ENCODE measurements at regions of chrX and their contacts with region 1.

Region 1: DNA sequence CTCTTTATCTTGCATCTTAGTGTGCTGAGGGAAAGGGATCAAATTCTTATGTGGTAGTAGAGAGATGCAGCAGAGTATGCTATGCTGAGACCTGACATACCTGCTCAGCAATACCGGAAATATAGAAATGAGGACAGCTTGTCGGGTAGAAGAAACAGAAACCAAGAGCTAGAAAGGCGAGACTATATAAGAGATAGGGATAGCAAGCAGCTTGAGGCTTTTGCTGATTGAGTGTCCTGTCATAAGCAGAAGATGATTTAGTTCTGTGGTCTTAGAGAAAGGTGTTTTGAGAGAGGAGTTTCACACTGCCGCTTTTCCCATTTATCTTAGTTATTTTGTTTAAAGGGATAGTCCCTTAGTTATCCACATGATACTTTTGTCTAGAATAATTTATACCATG is 31.7 kb downstream of the USP9X start:
- DNase-seq: no peak
- H3K4me3 Mint-ChIP-seq: peak overlapping the region; percentile 7
- H3K27ac Mint-ChIP-seq: no peak overlapping the region
- H3K4me1 Mint-ChIP-seq: peaks cover 14% of the 10 kb centered on the region
- H3K27me3 Mint-ChIP-seq: peaks cover 3% of the 10 kb centered on the region
- CTCF ChIP-seq: no peak

Region 2: GRCh38 chrX:40647307-40648197 is 469.4 kb before region 1 on chrX and contains the start of gene CXorf38:
- CTCF ChIA-PET with region 1: interaction called, 21 read pairs
- POLR2A ChIA-PET with region 1: no interaction called
- intact Hi-C with region 1: loop called (anchors 1 kb)
- DNase-seq: peak; percentile 81
- H3K4me3 Mint-ChIP-seq: peak within 1 kb of the TSS; percentile 85
- H3K27ac Mint-ChIP-seq: peak within 1 kb of the TSS; percentile 90
- H3K4me1 Mint-ChIP-seq: peaks cover 9% of the 10 kb centered on the region
- H3K27me3 Mint-ChIP-seq: peaks cover 42% of the 10 kb centered on the region
- CTCF ChIP-seq: no peak
- total RNA-seq, gene CXorf38: 21.4 and 21.9 TPM in 2 replicates

Region 3: DNA sequence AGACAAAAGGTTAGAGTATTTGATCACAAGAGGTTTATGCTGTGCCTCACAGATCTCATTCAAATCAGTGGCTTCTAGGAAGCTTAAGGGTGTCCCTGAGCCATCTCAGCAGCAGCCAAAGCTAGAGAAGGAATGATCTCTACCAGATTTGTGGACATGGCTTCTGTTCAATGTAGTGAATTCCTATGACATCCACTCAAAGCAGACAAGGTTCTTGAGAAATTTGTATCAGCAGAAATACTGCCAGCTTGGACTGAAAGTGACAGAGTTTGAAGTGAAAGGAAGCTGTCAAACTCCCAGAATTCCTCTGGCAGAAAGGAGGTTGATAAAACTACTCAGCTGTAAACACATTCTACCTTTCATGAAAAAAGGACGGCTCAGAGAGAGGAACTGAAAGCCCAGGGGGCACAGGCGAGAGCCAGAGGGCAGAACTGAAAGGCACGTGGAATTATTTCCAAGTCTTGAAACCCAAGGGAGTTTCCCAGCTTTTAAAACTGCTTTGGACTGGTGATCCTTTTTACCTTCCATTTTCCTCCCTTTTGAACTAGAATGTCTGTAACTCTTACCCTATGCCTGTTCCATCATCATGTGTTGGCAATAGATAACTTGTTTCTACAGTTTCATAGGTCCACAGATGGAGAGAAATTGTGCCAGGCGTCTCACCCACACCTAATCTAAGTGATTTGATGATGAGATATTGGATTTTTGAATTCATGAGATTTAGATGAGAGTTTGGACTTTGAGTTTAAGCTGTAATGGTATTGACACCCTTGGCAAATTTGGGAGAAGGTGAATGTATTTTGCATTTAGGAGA is 367.1 kb before region 1 on chrX:
- CTCF ChIA-PET with region 1: interaction called, 3 read pairs
- POLR2A ChIA-PET with region 1: no interaction called
- intact Hi-C with region 1: loop called (anchors 10 kb)
- DNase-seq: no peak
- H3K4me3 Mint-ChIP-seq: no peak overlapping the region
- H3K27ac Mint-ChIP-seq: no peak overlapping the region
- H3K4me1 Mint-ChIP-seq: no peaks in the 10 kb centered on the region
- H3K27me3 Mint-ChIP-seq: peaks cover 100% of the 10 kb centered on the region
- CTCF ChIP-seq: no peak

Region 4: DNA sequence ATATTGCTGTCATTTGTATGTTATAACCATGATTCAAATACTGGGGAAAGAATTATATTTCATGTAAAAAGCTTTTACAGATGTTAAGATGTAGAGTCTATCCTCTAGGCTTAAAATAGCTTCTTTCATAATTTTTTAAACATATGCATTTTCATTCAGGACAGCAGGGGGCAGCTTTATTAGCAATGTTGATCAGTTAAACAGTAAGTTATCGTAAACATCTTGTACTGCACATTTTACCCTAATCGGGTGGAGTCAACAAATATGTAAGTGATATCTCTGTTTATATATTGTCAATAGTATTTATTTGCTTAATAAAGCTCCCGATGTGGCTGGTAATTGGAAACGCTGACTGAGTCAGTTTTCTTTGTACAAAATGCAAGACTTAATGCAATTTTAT is 239.1 kb before region 1 on chrX:
- CTCF ChIA-PET with region 1: interaction called, 34 read pairs
- POLR2A ChIA-PET with region 1: no interaction called
- intact Hi-C with region 1: loop called (anchors 1 kb)
- DNase-seq: peak; percentile 42
- H3K4me3 Mint-ChIP-seq: no peak overlapping the region
- H3K27ac Mint-ChIP-seq: no peak overlapping the region
- H3K4me1 Mint-ChIP-seq: no peaks in the 10 kb centered on the region
- H3K27me3 Mint-ChIP-seq: peaks cover 72% of the 10 kb centered on the region
- CTCF ChIP-seq: peak; percentile 52

Region 5: DNA sequence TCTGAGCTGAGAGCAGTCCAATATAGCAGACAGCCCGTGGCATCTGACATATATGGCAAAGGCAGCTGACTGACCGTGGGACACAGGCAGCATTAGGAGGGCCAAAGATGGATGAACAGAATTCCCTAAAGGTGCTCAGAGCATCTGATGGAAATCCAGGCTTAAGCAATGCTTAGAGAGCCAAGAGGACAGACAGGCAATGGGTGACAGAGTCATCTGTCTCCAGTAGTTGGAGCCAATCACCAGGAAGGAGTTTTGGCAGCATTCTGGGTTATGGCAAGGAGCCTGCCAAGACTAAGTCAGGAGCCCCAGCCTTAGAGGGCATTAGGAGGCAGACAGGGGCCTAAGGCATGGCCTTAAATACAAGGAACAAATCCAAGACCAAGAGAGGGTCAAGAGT is 185.0 kb before region 1 on chrX:
- CTCF ChIA-PET with region 1: interaction called, 10 read pairs
- POLR2A ChIA-PET with region 1: no interaction called
- intact Hi-C with region 1: loop called (anchors 10 kb)
- DNase-seq: peak; percentile 49
- H3K4me3 Mint-ChIP-seq: no peak overlapping the region
- H3K27ac Mint-ChIP-seq: no peak overlapping the region
- H3K4me1 Mint-ChIP-seq: peaks cover 13% of the 10 kb centered on the region
- H3K27me3 Mint-ChIP-seq: peaks cover 48% of the 10 kb centered on the region
- CTCF ChIP-seq: no peak

Region 6: GRCh38 chrX:41096339-41096955 is 20.5 kb before region 1 on chrX:
- CTCF ChIA-PET with region 1: interaction called, 21 read pairs
- POLR2A ChIA-PET with region 1: no interaction called
- intact Hi-C with region 1: no loop called
- DNase-seq: no peak
- H3K4me3 Mint-ChIP-seq: no peak overlapping the region
- H3K27ac Mint-ChIP-seq: no peak overlapping the region
- H3K4me1 Mint-ChIP-seq: peaks cover 9% of the 10 kb centered on the region
- H3K27me3 Mint-ChIP-seq: peaks cover 30% of the 10 kb centered on the region
- CTCF ChIP-seq: no peak

Measured in MCF 10A (cell line).